ENCODE measurements at regions of chr16 and their contacts with region 1.

Region 1: DNA sequence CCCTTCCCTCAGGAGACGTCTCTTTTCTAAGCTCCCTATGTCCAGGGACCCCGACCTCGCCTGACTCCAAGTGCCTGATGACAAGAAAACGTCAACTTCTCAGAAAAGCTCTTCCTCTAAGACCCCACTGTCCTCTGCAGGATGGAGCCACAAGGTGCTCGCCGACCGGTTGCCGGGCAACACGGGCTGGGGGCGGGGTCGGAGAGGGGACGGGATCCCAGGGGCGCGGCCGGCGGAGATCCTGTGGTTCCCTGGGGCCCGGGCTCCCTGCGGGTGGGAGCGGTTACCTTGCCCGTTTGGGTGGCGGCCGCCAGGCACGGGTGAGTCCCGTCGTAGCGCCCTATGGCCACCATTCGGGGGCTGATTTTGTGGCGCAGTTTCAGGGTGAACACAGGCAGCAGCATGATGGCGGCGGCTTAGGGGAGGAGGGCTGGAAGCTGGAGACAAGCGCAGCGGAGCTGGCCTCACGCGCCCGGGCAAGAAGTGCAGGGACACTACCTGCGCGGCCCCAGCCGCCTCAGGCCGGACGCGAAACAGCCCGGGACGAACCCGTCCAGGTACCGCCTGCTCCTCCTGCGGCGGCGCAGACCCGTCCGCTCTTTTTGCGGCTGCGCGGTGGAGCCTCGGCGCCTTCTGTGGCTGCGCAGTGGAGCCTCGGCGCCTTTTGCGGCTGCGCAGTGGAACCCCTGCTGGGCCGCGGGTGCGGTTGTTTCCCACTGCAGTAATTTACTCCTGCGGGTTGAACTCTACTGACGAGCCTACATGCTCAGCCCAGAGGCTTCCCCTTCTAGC is at the start of gene BBS2:
- DNase-seq: peak; percentile 88 to 94 (median 91)
- H3K4me3 ChIP-seq: peak within 1 kb of the TSS; percentile 85
- H3K27ac ChIP-seq: peak within 1 kb of the TSS; percentile 42 to 58
- H3K4me1 ChIP-seq: peaks cover 11% of the 10 kb centered on the region
- H3K27me3 ChIP-seq: no peaks in the 10 kb centered on the region
- CTCF ChIP-seq: peak in 2 of 3 donors; percentile 21 to 30
- EP300 ChIP-seq: no peak
- POLR2A ChIP-seq: peak; percentile 89
- total RNA-seq, gene BBS2: 50.4 to 86.2 (median 67.1) TPM

Region 2: DNA sequence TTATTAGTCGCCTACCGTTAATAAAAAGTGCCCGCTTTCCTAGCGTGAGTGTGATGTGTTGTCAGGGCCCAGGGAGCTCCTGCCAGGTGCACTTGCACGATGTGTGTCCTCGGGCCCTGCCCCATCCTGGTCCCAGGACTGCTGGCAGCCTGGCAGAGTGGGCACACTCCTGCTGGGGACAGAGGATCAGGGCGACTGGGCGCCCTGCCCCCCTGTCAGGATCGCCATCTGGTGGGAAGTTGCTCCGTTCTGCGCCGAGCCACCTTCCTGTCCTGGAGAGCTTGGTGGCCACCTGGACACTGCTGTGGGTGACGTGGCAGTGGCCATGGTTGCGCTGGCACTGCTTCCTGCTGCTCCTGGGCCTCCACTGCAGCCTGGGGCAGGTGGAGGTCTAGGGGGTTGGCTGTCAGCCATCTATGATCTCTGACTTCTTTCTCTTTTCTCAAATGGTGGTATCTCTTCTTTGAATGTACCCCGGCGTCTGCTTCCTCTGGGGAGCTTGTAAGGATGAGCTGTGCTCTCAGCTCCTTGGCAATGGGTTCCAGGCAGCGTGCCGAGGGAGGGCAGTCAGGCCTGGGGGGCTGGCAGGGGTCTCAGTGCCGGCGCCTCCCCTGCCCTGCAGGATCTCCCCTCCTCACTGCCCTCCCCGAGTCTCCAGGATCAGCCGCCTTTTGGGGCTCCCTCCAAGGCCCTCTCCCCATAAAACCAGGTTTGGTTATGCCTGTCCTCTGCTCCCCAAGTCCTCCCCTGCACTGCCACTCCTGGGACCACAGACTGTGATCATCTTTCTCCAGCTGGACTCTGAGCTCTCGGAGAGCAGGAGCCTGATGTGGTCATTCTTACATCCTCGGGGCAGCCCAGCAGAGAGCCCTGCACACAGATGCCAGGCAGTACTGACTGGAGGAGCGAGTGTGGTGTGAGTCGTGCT is 171.2 kb before region 1 on chr16:
- intact Hi-C with region 1: no loop called
- DNase-seq: no peak
- H3K4me3 ChIP-seq: no peak overlapping the region
- H3K27ac ChIP-seq: no peak overlapping the region
- H3K4me1 ChIP-seq: no peaks in the 10 kb centered on the region
- H3K27me3 ChIP-seq: no peaks in the 10 kb centered on the region
- CTCF ChIP-seq: no peak
- EP300 ChIP-seq: no peak
- POLR2A ChIP-seq: no peak

Region 3: DNA sequence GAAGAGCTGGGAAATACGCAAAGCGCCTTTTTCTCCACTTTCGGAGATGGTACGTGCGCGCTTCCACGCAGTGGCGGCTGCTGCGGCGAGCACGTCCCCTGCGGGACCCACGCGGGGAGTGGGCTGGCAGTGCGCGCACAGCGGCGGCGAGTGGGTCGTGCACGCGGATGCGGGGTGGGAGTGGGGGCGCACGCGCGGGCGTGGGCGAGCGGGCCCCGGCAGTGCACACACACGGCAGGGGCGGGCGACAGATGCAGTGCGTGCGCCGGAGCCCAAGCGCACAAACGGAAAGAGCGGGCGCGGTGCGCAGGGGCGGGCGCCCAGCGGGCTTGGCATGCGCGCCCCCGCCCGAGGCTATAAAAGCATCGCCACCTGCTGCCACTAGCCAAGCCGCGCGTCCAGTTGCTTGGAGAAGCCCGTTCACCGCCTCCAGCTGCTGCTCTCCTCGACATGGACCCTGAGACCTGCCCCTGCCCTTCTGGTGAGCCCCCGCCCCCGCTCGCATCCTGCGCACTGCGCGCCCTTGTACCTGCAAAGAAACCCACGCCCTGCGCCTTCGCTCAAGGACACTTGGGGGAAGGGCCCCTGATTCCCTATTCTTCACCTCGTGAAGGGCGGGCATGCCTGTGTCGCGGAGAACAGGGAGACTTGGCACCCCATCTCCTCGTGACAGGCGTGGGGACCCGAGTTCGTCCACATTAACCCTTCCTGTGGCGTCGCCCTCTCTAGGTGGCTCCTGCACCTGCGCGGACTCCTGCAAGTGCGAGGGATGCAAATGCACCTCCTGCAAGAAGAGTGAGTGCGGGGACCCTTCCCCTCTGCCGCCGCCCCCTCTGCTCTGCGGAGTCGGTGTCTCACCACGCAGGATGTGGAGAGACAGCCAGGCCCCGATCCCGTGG is 69.7 kb after region 1 on chr16 and contains the start of gene MT3:
- intact Hi-C with region 1: loop called in 1 of 4 experiments (anchors 10 kb)
- DNase-seq: peak in 1 of 5 donors; percentile 15
- H3K4me3 ChIP-seq: no peak within 1 kb of the TSS
- H3K27ac ChIP-seq: no peak within 1 kb of the TSS
- H3K4me1 ChIP-seq: peaks cover 3% of the 10 kb centered on the region
- H3K27me3 ChIP-seq: no peaks in the 10 kb centered on the region
- CTCF ChIP-seq: no peak
- EP300 ChIP-seq: no peak
- POLR2A ChIP-seq: no peak
- total RNA-seq, gene MT3: 0.53 to 4.8 (median 1.5) TPM in 4 of 7 donors, not detected in the others

Region 4: DNA sequence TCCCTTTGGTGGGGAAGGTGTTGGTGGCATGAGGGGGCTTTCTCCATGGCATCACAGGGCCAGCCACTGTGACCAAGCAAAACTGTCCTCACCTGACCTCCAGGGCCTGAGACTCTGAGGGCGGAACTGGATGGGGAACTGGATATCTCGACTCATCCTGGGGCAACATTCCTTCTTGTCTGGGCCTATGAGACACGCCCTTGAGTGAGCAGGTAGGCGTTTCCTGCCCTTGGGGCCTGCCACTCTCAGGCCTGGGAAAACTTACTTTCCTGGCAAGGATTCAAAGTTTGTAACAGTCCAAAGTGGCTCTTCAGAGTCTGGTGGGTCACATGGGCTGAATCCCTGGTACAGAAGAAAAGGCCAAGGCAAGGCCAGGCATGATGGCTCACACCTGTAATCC is 172.2 kb after region 1 on chr16:
- intact Hi-C with region 1: loop called in 1 of 4 experiments (anchors 10 kb)
- DNase-seq: no peak
- H3K4me3 ChIP-seq: no peak overlapping the region
- H3K27ac ChIP-seq: no peak overlapping the region
- H3K4me1 ChIP-seq: peaks cover 3% of the 10 kb centered on the region
- H3K27me3 ChIP-seq: no peaks in the 10 kb centered on the region
- CTCF ChIP-seq: no peak
- EP300 ChIP-seq: no peak
- POLR2A ChIP-seq: no peak

Region 5: GRCh38 chr16:56700195-56700594 is 180.5 kb after region 1 on chr16:
- intact Hi-C with region 1: loop called in 3 of 4 experiments (anchors 5 to 10 kb)
- DNase-seq: no peak
- H3K4me3 ChIP-seq: no peak overlapping the region
- H3K27ac ChIP-seq: no peak overlapping the region
- H3K4me1 ChIP-seq: no peaks in the 10 kb centered on the region
- H3K27me3 ChIP-seq: no peaks in the 10 kb centered on the region
- CTCF ChIP-seq: no peak
- EP300 ChIP-seq: no peak
- POLR2A ChIP-seq: no peak

Region 6: GRCh38 chr16:56708525-56709442 is 189.1 kb after region 1 on chr16:
- intact Hi-C with region 1: loop called in 2 of 4 experiments (anchors 5 to 10 kb)
- DNase-seq: no peak
- H3K4me3 ChIP-seq: no peak overlapping the region
- H3K27ac ChIP-seq: no peak overlapping the region
- H3K4me1 ChIP-seq: no peaks in the 10 kb centered on the region
- H3K27me3 ChIP-seq: no peaks in the 10 kb centered on the region
- CTCF ChIP-seq: no peak
- EP300 ChIP-seq: no peak
- POLR2A ChIP-seq: no peak